GM13977 (cell line): ENCODE measurements at regions of chr20 and their contacts with region 1.

Region 1: DNA sequence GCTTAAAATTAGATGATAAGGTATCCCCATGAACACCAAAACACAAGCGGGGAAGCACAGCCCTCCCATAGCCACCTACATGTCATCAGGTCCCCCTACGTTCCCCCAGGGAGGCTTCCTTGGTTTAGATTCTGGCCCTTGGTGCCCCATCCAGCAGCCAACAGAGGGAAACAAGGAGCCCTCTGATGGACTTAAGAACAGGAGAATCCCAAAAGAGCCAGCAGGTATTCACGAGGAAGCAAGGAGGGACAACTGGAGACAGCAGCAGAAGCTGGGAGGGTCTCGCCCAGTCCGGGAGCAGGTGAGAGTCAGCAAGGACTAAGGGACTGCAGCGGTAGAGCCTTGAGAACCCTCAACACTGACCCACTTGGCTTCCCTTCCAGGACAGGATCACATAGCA is 58.4 kb upstream of the TOP1 start:
- DNase-seq: no peak
- CTCF ChIP-seq: no peak

Region 2: GRCh38 chr20:40463171-40463570 is 507.0 kb before region 1 on chr20:
- in situ Hi-C with region 1: no loop called
- DNase-seq: no peak
- CTCF ChIP-seq: no peak

Region 3: GRCh38 chr20:41095110-41095969 is 125.1 kb after region 1 on chr20:
- in situ Hi-C with region 1: loop called (anchors 10 kb)
- DNase-seq: peak; percentile 46
- CTCF ChIP-seq: peak; percentile 81

Region 4: DNA sequence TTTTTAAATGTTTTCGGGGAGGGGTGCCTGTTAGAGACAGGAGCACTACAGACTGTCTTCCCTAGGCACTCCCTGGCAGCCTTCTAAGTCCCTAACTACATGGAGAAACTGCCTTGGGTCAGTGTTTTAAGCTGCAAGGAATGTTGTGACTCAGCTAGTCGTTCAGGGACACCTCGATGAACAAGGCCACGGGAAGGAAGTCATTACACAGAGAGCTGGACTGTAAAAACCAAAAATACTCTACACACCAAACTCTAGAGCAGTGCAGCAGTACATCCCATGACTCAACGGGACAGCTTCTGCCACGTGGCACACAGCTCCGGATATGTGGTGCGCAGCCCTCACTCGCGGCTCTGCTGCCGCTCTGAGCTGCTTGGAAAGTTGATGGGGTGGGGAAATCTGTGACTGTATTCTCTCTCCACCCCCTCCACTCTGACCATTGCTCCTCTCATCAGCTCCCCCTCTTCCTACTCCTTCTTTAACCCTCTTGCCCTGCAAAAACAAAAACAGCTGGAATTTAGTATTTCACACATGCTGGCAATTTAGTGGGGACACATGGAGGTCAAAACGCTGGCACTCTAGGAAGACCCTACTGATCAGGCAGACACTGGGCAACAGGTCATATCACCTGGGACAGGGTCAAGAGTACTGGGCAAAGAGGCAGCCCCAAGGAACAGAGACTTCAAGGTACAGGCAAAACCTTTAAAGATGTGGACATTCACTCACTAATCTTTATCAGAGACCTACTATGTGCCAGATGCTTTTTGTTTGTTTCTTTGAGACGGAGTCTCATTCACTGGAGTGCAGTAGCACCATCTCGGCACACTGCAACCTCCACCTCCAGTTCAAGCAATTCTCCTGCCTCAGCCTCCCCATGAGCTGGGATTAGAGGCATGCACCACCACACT is 359.5 kb after region 1 on chr20:
- in situ Hi-C with region 1: loop called (anchors 5 kb)
- DNase-seq: peak; percentile 62
- CTCF ChIP-seq: no peak